GM12878 (cell line): ENCODE measurements at regions of chr9 and their contacts with region 1.

Region 1: GRCh38 chr9:99231711-99232110 is 9.6 kb downstream of the SEC61B start:
- DNase-seq: peak; percentile 25
- ATAC-seq: peak; percentile 53
- H3K4me3 ChIP-seq: no peak overlapping the region
- H3K27ac ChIP-seq: no peak overlapping the region
- H3K4me1 ChIP-seq: peaks cover 26% of the 10 kb centered on the region
- H3K27me3 ChIP-seq: no peaks in the 10 kb centered on the region
- CTCF ChIP-seq: peak; percentile 85 to 90 (median 88)
- EP300 ChIP-seq: no peak
- POLR2A ChIP-seq: no peak
- RAD21 ChIP-seq: peak; percentile 81

Region 2: GRCh38 chr9:98597236-98597771 is 634.4 kb before region 1 on chr9:
- CTCF ChIA-PET with region 1: no interaction called
- POLR2A ChIA-PET with region 1: no interaction called
- RAD21 ChIA-PET with region 1: no interaction called
- SMC1A ChIA-PET with region 1: no interaction called
- in situ Hi-C with region 1: no loop called
- intact Hi-C with region 1: no loop called
- DNase-seq: no peak
- ATAC-seq: no peak
- H3K4me3 ChIP-seq: no peak overlapping the region
- H3K27ac ChIP-seq: no peak overlapping the region
- H3K4me1 ChIP-seq: no peaks in the 10 kb centered on the region
- H3K27me3 ChIP-seq: peaks cover 0 to 3% of the 10 kb centered on the region in 2 experiments; a peak in 1 of 4 replicates
- CTCF ChIP-seq: no peak
- EP300 ChIP-seq: no peak
- POLR2A ChIP-seq: no peak
- RAD21 ChIP-seq: no peak

Region 3: GRCh38 chr9:99050292-99050911 is 181.3 kb before region 1 on chr9:
- CTCF ChIA-PET with region 1: no interaction called
- POLR2A ChIA-PET with region 1: no interaction called
- RAD21 ChIA-PET with region 1: no interaction called
- SMC1A ChIA-PET with region 1: no interaction called
- in situ Hi-C with region 1: no loop called
- intact Hi-C with region 1: no loop called
- DNase-seq: no peak
- ATAC-seq: no peak
- H3K4me3 ChIP-seq: no peak overlapping the region
- H3K27ac ChIP-seq: no peak overlapping the region
- H3K4me1 ChIP-seq: no peaks in the 10 kb centered on the region
- H3K27me3 ChIP-seq: no peaks in the 10 kb centered on the region
- CTCF ChIP-seq: no peak
- EP300 ChIP-seq: no peak
- POLR2A ChIP-seq: no peak
- RAD21 ChIP-seq: no peak

Region 4: GRCh38 chr9:99092643-99093491 is 138.8 kb before region 1 on chr9:
- CTCF ChIA-PET with region 1: no interaction called
- POLR2A ChIA-PET with region 1: no interaction called
- RAD21 ChIA-PET with region 1: no interaction called
- SMC1A ChIA-PET with region 1: no interaction called
- in situ Hi-C with region 1: no loop called
- intact Hi-C with region 1: no loop called
- DNase-seq: no peak
- ATAC-seq: no peak
- H3K4me3 ChIP-seq: no peak overlapping the region
- H3K27ac ChIP-seq: no peak overlapping the region
- H3K4me1 ChIP-seq: no peaks in the 10 kb centered on the region
- H3K27me3 ChIP-seq: no peaks in the 10 kb centered on the region; a peak in 1 of 4 replicates
- CTCF ChIP-seq: no peak
- EP300 ChIP-seq: no peak
- POLR2A ChIP-seq: no peak
- RAD21 ChIP-seq: no peak

Region 5: GRCh38 chr9:99104459-99105151 is 127.1 kb before region 1 on chr9 and contains the start of gene TGFBR1:
- CTCF ChIA-PET with region 1: no interaction called
- POLR2A ChIA-PET with region 1: no interaction called
- RAD21 ChIA-PET with region 1: no interaction called
- SMC1A ChIA-PET with region 1: no interaction called
- in situ Hi-C with region 1: no loop called
- intact Hi-C with region 1: no loop called
- DNase-seq: peak; percentile 53
- ATAC-seq: peak; percentile 89
- H3K4me3 ChIP-seq: peak within 1 kb of the TSS; percentile 87
- H3K27ac ChIP-seq: peak within 1 kb of the TSS; percentile 67
- H3K4me1 ChIP-seq: peaks cover 8% of the 10 kb centered on the region; the same call in 1 of the 2 replicates
- H3K27me3 ChIP-seq: no peaks in the 10 kb centered on the region
- CTCF ChIP-seq: peak in 1 of 3 experiments; percentile 21; a peak in 1 of 6 replicates
- EP300 ChIP-seq: no peak
- POLR2A ChIP-seq: no peak
- RAD21 ChIP-seq: no peak
- polyA plus RNA-seq, gene TGFBR1: 5.7 to 19.6 TPM

Region 6: GRCh38 chr9:99197987-99198386 is 33.7 kb before region 1 on chr9:
- CTCF ChIA-PET with region 1: interaction called, 47 read pairs
- POLR2A ChIA-PET with region 1: interaction called, 3 read pairs
- RAD21 ChIA-PET with region 1: interaction called, 8 read pairs
- SMC1A ChIA-PET with region 1: interaction called, 40 read pairs
- in situ Hi-C with region 1: no loop called
- intact Hi-C with region 1: no loop called
- DNase-seq: no peak
- ATAC-seq: no peak
- H3K4me3 ChIP-seq: no peak overlapping the region
- H3K27ac ChIP-seq: no peak overlapping the region
- H3K4me1 ChIP-seq: peaks cover 34% of the 10 kb centered on the region
- H3K27me3 ChIP-seq: no peaks in the 10 kb centered on the region
- CTCF ChIP-seq: no peak
- EP300 ChIP-seq: no peak
- POLR2A ChIP-seq: no peak
- RAD21 ChIP-seq: no peak

Region 7: DNA sequence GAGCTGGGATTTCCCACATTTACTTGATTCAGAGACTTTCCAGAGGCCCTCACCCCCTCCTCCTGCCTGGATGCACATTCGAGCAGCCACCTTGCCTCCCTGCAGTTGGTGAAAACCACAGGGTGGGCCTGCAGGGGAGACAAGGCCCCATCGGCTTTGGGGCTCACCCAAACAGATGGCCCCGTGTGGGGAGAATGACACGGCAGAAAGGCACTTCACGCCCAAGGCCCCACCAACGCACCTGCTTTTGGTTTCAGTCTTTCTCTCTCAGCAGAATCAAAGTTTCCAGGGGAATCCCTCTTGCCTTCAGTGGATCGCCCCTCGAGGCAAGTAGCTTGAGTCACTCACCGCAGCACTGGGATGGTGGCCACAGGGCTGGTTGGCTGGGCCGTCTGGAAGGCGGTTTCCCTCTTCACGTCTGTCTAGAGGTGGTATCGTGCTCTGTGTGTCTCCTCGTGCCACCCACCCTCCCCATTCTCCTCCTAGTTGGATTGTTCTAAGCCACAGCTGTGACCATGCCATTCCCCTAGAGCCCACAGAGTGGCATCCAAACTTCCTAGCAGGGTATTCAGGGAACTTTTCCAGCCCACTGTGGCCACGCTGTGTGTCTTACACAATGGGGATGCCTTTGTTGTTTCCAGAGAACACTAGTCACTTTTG is 22.2 kb after region 1 on chr9:
- CTCF ChIA-PET with region 1: interaction called, 70 read pairs
- POLR2A ChIA-PET with region 1: interaction called, 8 read pairs
- RAD21 ChIA-PET with region 1: interaction called, 87 read pairs
- SMC1A ChIA-PET with region 1: interaction called, 143 read pairs
- in situ Hi-C with region 1: no loop called
- intact Hi-C with region 1: loop called (anchors 1 kb)
- DNase-seq: peak; percentile 90
- ATAC-seq: peak; percentile 89
- H3K4me3 ChIP-seq: peak overlapping the region; percentile 29; the same call in 1 of the 2 replicates
- H3K27ac ChIP-seq: peak overlapping the region; percentile 96
- H3K4me1 ChIP-seq: peaks cover 34% of the 10 kb centered on the region
- H3K27me3 ChIP-seq: no peaks in the 10 kb centered on the region
- CTCF ChIP-seq: peak; percentile 2 to 17 (median 13); a peak in 3 of 6 replicates
- EP300 ChIP-seq: peak; percentile 75 to 89; a peak in 3 of 4 replicates
- POLR2A ChIP-seq: peak; percentile 81
- RAD21 ChIP-seq: no peak

Region 8: GRCh38 chr9:99272836-99273235 is 41.1 kb after region 1 on chr9:
- CTCF ChIA-PET with region 1: interaction called, 13 read pairs
- POLR2A ChIA-PET with region 1: no interaction called
- RAD21 ChIA-PET with region 1: interaction called, 10 read pairs
- SMC1A ChIA-PET with region 1: interaction called, 34 read pairs
- in situ Hi-C with region 1: no loop called
- intact Hi-C with region 1: no loop called
- DNase-seq: no peak
- ATAC-seq: peak; percentile 69
- H3K4me3 ChIP-seq: no peak overlapping the region
- H3K27ac ChIP-seq: no peak overlapping the region
- H3K4me1 ChIP-seq: peaks cover 14% of the 10 kb centered on the region
- H3K27me3 ChIP-seq: no peaks in the 10 kb centered on the region
- CTCF ChIP-seq: no peak
- EP300 ChIP-seq: peak in 1 of 2 experiments; percentile 45; a peak in 1 of 4 replicates
- POLR2A ChIP-seq: no peak
- RAD21 ChIP-seq: no peak

Region 9: GRCh38 chr9:99336005-99336404 is 104.3 kb after region 1 on chr9:
- CTCF ChIA-PET with region 1: interaction called, 15 read pairs
- POLR2A ChIA-PET with region 1: no interaction called
- RAD21 ChIA-PET with region 1: interaction called, 7 read pairs
- SMC1A ChIA-PET with region 1: interaction called, 5 read pairs
- in situ Hi-C with region 1: no loop called
- intact Hi-C with region 1: no loop called
- DNase-seq: no peak
- ATAC-seq: peak; percentile 68
- H3K4me3 ChIP-seq: no peak overlapping the region
- H3K27ac ChIP-seq: no peak overlapping the region
- H3K4me1 ChIP-seq: no peaks in the 10 kb centered on the region
- H3K27me3 ChIP-seq: no peaks in the 10 kb centered on the region
- CTCF ChIP-seq: peak in 1 of 3 experiments; percentile 4; a peak in 1 of 6 replicates
- EP300 ChIP-seq: no peak
- POLR2A ChIP-seq: no peak
- RAD21 ChIP-seq: 0 out of 2 replicates have a peak, but pooled peaks have one; percentile 18

Region 10: DNA sequence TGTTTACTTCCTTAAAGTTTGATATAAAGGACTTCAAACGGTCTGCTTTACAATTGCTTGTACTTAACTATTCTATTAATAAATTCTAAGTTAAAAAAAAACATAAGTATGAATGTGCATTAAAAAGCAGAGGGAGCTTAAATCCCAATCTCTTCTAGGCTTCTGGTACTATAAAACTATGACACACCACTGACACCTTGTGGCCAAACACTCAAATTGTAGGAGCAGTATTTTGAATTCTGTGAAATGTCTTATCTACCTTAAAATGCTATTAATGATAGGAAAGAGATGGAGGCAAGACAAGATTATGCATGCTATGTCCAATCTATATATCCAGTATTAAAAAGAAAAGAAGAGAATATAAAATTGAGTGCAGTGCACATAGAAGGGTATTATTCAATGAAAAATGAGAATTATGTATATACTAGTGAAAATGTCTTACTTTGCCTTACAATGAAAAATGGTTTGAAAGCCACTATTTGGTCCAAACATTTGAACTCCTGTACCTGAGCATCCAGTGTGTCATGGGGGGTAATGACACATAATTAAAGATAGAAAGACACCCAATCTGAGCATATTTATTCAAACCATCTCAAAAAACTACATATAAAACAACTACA is 779.5 kb after region 1 on chr9:
- CTCF ChIA-PET with region 1: interaction called, 15 read pairs
- POLR2A ChIA-PET with region 1: no interaction called
- RAD21 ChIA-PET with region 1: interaction called, 8 read pairs
- SMC1A ChIA-PET with region 1: interaction called, 5 read pairs
- in situ Hi-C with region 1: no loop called
- intact Hi-C with region 1: no loop called
- DNase-seq: peak; percentile 38
- ATAC-seq: peak; percentile 73
- H3K4me3 ChIP-seq: no peak overlapping the region
- H3K27ac ChIP-seq: no peak overlapping the region
- H3K4me1 ChIP-seq: no peaks in the 10 kb centered on the region
- H3K27me3 ChIP-seq: no peaks in the 10 kb centered on the region
- CTCF ChIP-seq: peak; percentile 48 to 58 (median 56)
- EP300 ChIP-seq: no peak
- POLR2A ChIP-seq: no peak
- RAD21 ChIP-seq: peak; percentile 76